Naive thymus-derived CD4-positive, alpha-beta T cell (primary cell): ENCODE measurements at regions of chr7 and their contacts with region 1.

Region 1: GRCh38 chr7:38232502-38233366 is 40.7 kb downstream of the TARP start:
- DNase-seq: peak; percentile 13 to 78 (median 47)
- ATAC-seq: peak; percentile 91
- H3K4me3 ChIP-seq: peak overlapping the region; percentile 2
- H3K4me3 Mint-ChIP-seq: peak overlapping the region; percentile 18 to 88 (median 67)
- H3K27ac ChIP-seq: peak overlapping the region; percentile 34
- H3K27ac Mint-ChIP-seq: peak overlapping the region; percentile 26 to 94 (median 89)
- H3K4me1 ChIP-seq: peaks cover 16 to 84% of the 10 kb centered on the region in 2 donors
- H3K4me1 Mint-ChIP-seq: peaks cover 17 to 72% (median 48%) of the 10 kb centered on the region in 7 donors
- H3K27me3 ChIP-seq: no peaks in the 10 kb centered on the region
- H3K27me3 Mint-ChIP-seq: no peaks in the 10 kb centered on the region

Region 2: DNA sequence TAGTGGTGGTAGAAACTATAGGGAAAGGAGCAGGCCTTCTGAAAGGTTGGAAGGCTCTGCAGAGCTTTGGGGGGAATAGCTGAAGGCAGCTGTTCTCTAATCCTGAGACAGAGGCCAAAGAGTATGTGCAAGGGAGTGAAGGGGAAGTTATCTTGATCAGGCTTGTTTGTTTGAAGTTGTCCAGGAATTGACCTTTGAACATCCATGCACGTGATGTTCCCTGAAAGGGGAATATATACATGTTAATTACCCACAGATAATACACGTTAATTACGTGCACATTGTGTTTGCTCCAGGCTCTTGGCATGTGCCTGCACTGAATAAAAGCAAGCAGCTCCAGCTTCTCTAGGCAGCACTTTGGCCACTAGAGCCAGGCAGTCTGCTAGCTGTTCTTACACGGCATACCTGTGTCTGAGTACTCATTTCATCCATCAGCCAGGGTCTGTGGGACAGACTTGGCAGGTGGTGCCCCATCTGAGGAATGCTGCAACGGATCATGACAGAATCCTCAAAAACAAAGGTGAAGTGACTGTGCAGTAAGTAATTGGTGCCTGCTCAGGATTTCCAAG is 72.6 kb before region 1 on chr7:
- CTCF ChIA-PET with region 1: no interaction called
- POLR2A ChIA-PET with region 1: no interaction called
- intact Hi-C with region 1: no loop called
- DNase-seq: no peak
- ATAC-seq: no peak
- H3K4me3 ChIP-seq: no peak overlapping the region
- H3K4me3 Mint-ChIP-seq: no peak overlapping the region
- H3K27ac ChIP-seq: no peak overlapping the region
- H3K27ac Mint-ChIP-seq: no peak overlapping the region
- H3K4me1 ChIP-seq: no peaks in the 10 kb centered on the region
- H3K4me1 Mint-ChIP-seq: peaks cover 0 to 2% (median 0%) of the 10 kb centered on the region in 7 donors
- H3K27me3 ChIP-seq: no peaks in the 10 kb centered on the region
- H3K27me3 Mint-ChIP-seq: peaks cover 0 to 30% (median 14%) of the 10 kb centered on the region in 5 donors

Region 3: DNA sequence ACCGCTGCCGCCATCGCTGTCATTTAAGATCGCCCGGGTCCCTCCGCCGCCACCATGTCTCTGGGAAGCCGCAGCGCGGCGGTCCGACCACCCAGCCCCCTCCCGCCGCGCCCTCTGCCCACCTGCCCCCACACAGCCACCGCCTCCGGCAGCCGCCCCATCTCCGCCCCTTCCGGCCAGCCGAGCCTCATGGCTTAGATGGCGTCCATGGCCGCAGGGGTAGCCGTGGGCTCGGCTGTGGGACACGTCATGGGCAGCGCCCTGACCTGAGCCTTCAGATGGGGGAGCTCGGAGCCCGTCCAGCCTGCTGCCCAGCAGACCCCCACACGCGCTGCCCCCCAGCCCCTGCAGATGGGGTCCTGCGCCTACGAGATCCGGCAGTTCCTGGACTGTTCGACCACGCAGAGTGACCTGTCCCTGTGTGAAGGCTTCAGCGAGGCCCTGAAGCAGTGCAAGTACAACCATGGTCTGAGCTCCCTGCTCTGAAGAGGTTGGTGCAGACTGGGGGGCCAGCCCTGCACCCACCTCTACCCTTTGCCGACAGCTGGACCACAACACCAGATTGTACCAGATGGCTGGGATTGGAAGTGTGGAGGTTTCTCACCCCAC is 78.7 kb after region 1 on chr7:
- CTCF ChIA-PET with region 1: no interaction called
- POLR2A ChIA-PET with region 1: interaction called, 3 read pairs
- intact Hi-C with region 1: loop called in 1 of 2 experiments (anchors 5 kb)
- DNase-seq: no peak
- ATAC-seq: peak; percentile 58
- H3K4me3 ChIP-seq: no peak overlapping the region
- H3K4me3 Mint-ChIP-seq: peak overlapping the region; percentile 59 to 82 (median 71)
- H3K27ac ChIP-seq: peak overlapping the region; percentile 35
- H3K27ac Mint-ChIP-seq: peak overlapping the region; percentile 28 to 83 (median 55)
- H3K4me1 ChIP-seq: peaks cover 6 to 14% of the 10 kb centered on the region in 2 donors
- H3K4me1 Mint-ChIP-seq: peaks cover 0 to 40% (median 6%) of the 10 kb centered on the region in 7 donors
- H3K27me3 ChIP-seq: no peaks in the 10 kb centered on the region
- H3K27me3 Mint-ChIP-seq: no peaks in the 10 kb centered on the region

Region 4: GRCh38 chr7:38411404-38411803 is 178.7 kb after region 1 on chr7:
- CTCF ChIA-PET with region 1: no interaction called
- POLR2A ChIA-PET with region 1: no interaction called
- intact Hi-C with region 1: no loop called
- DNase-seq: no peak
- ATAC-seq: no peak
- H3K4me3 ChIP-seq: no peak overlapping the region
- H3K4me3 Mint-ChIP-seq: no peak overlapping the region
- H3K27ac ChIP-seq: no peak overlapping the region
- H3K27ac Mint-ChIP-seq: peak overlapping the region in 2 of 9 donors; percentile 13 to 19
- H3K4me1 ChIP-seq: peaks cover 0 to 12% of the 10 kb centered on the region in 2 donors
- H3K4me1 Mint-ChIP-seq: peaks cover 2 to 32% (median 29%) of the 10 kb centered on the region in 7 donors
- H3K27me3 ChIP-seq: no peaks in the 10 kb centered on the region
- H3K27me3 Mint-ChIP-seq: peaks cover 0 to 5% (median 0%) of the 10 kb centered on the region in 5 donors